ENCODE measurements at regions of chr1 and their contacts with region 1.

Region 1: DNA sequence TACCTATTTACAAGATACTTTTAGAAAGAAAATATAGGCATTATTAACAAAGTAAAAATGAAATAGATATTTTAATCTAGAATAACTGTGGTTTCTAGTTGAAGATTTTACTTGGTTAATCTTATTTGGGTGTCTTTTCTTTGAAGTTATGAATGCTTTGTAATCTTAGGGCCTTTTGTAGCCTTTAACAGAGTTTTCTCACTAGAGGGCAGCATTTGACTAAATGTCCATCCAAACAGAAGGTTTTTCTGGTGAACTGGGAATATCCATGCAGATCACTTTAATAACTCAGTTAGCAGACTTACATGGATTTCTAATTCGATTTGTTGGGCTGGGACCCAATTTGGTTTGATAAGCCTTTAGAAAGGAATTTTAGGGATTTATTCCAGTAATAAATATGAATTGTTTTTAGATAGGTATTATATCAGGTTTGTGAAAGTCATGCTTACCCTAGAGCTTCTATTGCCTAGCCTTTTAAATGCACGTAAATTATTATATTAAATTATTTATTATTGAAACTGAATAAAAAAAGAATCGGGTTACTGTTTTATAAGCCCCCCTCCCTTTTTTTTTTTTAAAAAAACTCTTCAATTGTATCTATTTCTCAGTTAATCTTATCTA is 119.7 kb downstream of the ZNF326 start:
- DNase-seq: peak; percentile 77
- ATAC-seq: peak; percentile 42; the same call in 1 of the 2 replicates
- H3K4me3 ChIP-seq: no peak overlapping the region
- H3K27ac ChIP-seq: no peak overlapping the region
- H3K4me1 ChIP-seq: no peaks in the 10 kb centered on the region
- H3K27me3 ChIP-seq: peaks cover 58% of the 10 kb centered on the region
- CTCF ChIP-seq: peak; percentile 80

Region 2: GRCh38 chr1:90133133-90133532 is 18.5 kb after region 1 on chr1:
- CTCF ChIA-PET with region 1: no interaction called
- POLR2A ChIA-PET with region 1: no interaction called
- intact Hi-C with region 1: no loop called
- DNase-seq: peak; percentile 62
- ATAC-seq: peak; percentile 62
- H3K4me3 ChIP-seq: no peak overlapping the region
- H3K27ac ChIP-seq: no peak overlapping the region
- H3K4me1 ChIP-seq: no peaks in the 10 kb centered on the region
- H3K27me3 ChIP-seq: peaks cover 57% of the 10 kb centered on the region
- CTCF ChIP-seq: peak; percentile 72

Region 3: GRCh38 chr1:90149101-90149500 is 34.5 kb after region 1 on chr1:
- CTCF ChIA-PET with region 1: no interaction called
- POLR2A ChIA-PET with region 1: no interaction called
- intact Hi-C with region 1: no loop called
- DNase-seq: no peak
- ATAC-seq: no peak
- H3K4me3 ChIP-seq: no peak overlapping the region
- H3K27ac ChIP-seq: no peak overlapping the region
- H3K4me1 ChIP-seq: no peaks in the 10 kb centered on the region
- H3K27me3 ChIP-seq: 0 out of 2 replicates have a peak, but pooled peaks cover 9% of the 10 kb centered on the region
- CTCF ChIP-seq: peak; percentile 47

Region 4: GRCh38 chr1:90210631-90211491 is 96.2 kb after region 1 on chr1:
- CTCF ChIA-PET with region 1: no interaction called
- POLR2A ChIA-PET with region 1: no interaction called
- intact Hi-C with region 1: no loop called
- DNase-seq: no peak
- ATAC-seq: no peak
- H3K4me3 ChIP-seq: no peak overlapping the region
- H3K27ac ChIP-seq: no peak overlapping the region
- H3K4me1 ChIP-seq: no peaks in the 10 kb centered on the region
- H3K27me3 ChIP-seq: peaks cover 24% of the 10 kb centered on the region; the same call in 1 of the 2 replicates
- CTCF ChIP-seq: no peak

Region 5: DNA sequence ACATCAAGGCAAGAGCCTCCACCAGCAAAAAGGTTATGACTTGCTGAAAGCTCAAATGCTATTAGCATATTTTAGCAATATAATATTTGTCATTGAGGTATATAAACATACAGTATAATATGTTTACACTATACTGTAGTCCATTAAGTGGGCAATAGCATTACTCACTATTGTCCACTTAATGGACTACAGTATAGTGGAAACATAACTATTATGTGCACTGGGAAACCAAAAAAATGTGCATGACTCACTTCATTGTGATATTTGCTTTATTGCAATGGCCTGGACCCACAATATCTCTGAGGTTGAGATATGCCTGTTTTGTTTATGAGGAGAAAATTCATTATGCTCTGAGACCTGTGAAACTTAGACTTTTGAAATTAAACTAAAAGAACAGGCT is 302.5 kb after region 1 on chr1:
- CTCF ChIA-PET with region 1: no interaction called
- POLR2A ChIA-PET with region 1: interaction called, 15 read pairs
- intact Hi-C with region 1: no loop called
- DNase-seq: peak; percentile 77
- ATAC-seq: peak; percentile 98
- H3K4me3 ChIP-seq: no peak overlapping the region
- H3K27ac ChIP-seq: no peak overlapping the region
- H3K4me1 ChIP-seq: 0 out of 2 replicates have a peak, but pooled peaks cover 4% of the 10 kb centered on the region
- H3K27me3 ChIP-seq: no peaks in the 10 kb centered on the region
- CTCF ChIP-seq: no peak

Region 6: DNA sequence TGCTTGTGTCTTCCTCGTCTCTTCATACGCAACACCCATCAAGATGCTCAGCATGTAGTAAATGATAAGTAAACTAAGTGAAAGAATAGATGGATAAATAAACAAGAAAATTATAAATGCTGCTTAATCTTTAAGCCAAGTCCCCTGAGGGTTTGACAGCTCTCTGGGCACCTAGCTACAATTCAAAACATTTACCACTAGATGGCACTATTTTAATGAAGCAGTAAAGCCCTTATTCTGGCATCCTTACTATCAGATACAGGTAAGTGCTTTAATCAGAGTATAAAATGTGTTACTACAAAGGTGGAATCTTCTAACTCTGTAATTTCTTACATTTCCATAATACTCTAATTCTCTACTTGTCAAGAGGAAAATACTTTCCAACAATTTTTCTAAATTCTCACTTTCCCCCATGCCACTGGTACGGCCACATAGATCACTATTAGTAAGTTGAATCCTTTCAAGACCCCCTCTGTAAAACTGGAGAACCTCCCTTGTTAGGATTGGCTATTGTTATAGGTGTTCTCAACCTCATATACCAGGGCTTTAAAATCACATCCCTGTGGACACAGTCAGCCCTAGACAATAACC is 464.7 kb after region 1 on chr1:
- CTCF ChIA-PET with region 1: no interaction called
- POLR2A ChIA-PET with region 1: no interaction called
- intact Hi-C with region 1: loop called (anchors 10 kb)
- DNase-seq: peak; percentile 72
- ATAC-seq: peak; percentile 68; the same call in 1 of the 2 replicates
- H3K4me3 ChIP-seq: no peak overlapping the region
- H3K27ac ChIP-seq: no peak overlapping the region
- H3K4me1 ChIP-seq: no peaks in the 10 kb centered on the region
- H3K27me3 ChIP-seq: peaks cover 29% of the 10 kb centered on the region
- CTCF ChIP-seq: peak; percentile 75

Region 7: GRCh38 chr1:90721210-90722194 is 606.9 kb after region 1 on chr1:
- CTCF ChIA-PET with region 1: no interaction called
- POLR2A ChIA-PET with region 1: no interaction called
- intact Hi-C with region 1: loop called (anchors 2 kb)
- DNase-seq: peak; percentile 83
- ATAC-seq: peak; percentile 65
- H3K4me3 ChIP-seq: no peak overlapping the region
- H3K27ac ChIP-seq: no peak overlapping the region
- H3K4me1 ChIP-seq: 0 out of 2 replicates have a peak, but pooled peaks cover 7% of the 10 kb centered on the region
- H3K27me3 ChIP-seq: peaks cover 24% of the 10 kb centered on the region
- CTCF ChIP-seq: peak; percentile 86

Region 8: DNA sequence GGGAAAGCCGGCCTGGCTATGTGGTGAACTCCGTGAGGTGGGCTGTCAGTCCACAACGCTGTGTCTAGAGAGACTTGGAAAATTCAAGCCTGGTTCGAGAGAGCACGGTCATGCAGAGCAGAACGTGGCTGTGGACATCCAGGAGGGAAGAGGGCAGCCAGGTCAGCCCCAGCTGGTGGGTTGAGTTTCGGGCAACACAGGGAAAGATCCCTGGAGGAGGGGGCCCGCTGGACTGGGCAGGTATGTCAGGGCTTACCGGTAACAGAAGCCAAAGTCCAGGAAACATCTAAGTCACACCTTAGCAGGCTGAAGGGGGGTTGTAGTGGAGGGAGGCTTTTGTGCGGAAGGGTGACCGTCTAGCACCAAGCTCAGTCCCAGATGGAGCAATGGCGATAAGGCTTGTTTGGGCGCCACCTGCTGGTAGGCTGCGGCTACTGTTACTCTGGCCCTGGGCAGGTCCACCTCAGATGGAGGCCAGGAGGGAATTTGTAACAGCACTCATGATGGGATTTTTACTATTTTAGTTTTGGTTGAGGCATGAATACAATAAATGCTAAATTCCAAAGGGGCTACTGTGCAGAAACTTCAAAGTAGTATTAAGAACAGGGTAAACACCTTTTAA is 1050.5 kb after region 1 on chr1:
- CTCF ChIA-PET with region 1: no interaction called
- POLR2A ChIA-PET with region 1: no interaction called
- intact Hi-C with region 1: loop called (anchors 5 kb)
- DNase-seq: peak; percentile 75
- ATAC-seq: peak; percentile 95
- H3K4me3 ChIP-seq: no peak overlapping the region
- H3K27ac ChIP-seq: no peak overlapping the region
- H3K4me1 ChIP-seq: no peaks in the 10 kb centered on the region
- H3K27me3 ChIP-seq: 0 out of 2 replicates have a peak, but pooled peaks cover 8% of the 10 kb centered on the region
- CTCF ChIP-seq: peak; percentile 94